T-cell (primary cell): ENCODE measurements at regions of chr16 and their contacts with region 1.

Region 1: GRCh38 chr16:168424-168823 is 2.6 kb downstream of the HBM start:
- DNase-seq: no peak
- ATAC-seq: no peak
- H3K4me3 ChIP-seq: no peak overlapping the region
- H3K4me3 Mint-ChIP-seq: no peak overlapping the region
- H3K27ac ChIP-seq: no peak overlapping the region
- H3K27ac Mint-ChIP-seq: peak overlapping the region in 1 of 2 donors; percentile 31
- H3K4me1 ChIP-seq: peaks cover 4 to 23% of the 10 kb centered on the region in 2 experiments
- H3K4me1 Mint-ChIP-seq: peaks cover 0 to 22% (median 10%) of the 10 kb centered on the region in 3 donors
- H3K27me3 ChIP-seq: peaks cover 9 to 70% of the 10 kb centered on the region in 2 experiments
- H3K27me3 Mint-ChIP-seq: peaks cover 34 to 57% of the 10 kb centered on the region in 2 donors

Region 2: GRCh38 chr16:138049-138417 is 30.4 kb before region 1 on chr16:
- CTCF ChIA-PET with region 1: no interaction called
- POLR2A ChIA-PET with region 1: interaction called in 1 of 2 experiments, 13 read pairs
- DNase-seq: peak in 20 of 35 experiments; percentile 3 to 42 (median 19)
- ATAC-seq: peak in 3 of 4 experiments; percentile 31 to 46 (median 35)
- H3K4me3 ChIP-seq: peak overlapping the region; percentile 63 to 64
- H3K4me3 Mint-ChIP-seq: peak overlapping the region; percentile 79 to 89 (median 81)
- H3K27ac ChIP-seq: peak overlapping the region; percentile 49
- H3K27ac Mint-ChIP-seq: peak overlapping the region in 1 of 2 donors; percentile 55
- H3K4me1 ChIP-seq: peaks cover 3 to 20% of the 10 kb centered on the region in 2 experiments
- H3K4me1 Mint-ChIP-seq: peaks cover 19 to 29% (median 21%) of the 10 kb centered on the region in 3 donors
- H3K27me3 ChIP-seq: peaks cover 0 to under 1% of the 10 kb centered on the region in 2 experiments
- H3K27me3 Mint-ChIP-seq: peaks cover 0 to under 1% of the 10 kb centered on the region in 2 donors

Region 3: GRCh38 chr16:200388-200787 is 32.0 kb after region 1 on chr16:
- CTCF ChIA-PET with region 1: no interaction called
- POLR2A ChIA-PET with region 1: no interaction called
- DNase-seq: no peak
- ATAC-seq: no peak
- H3K4me3 ChIP-seq: no peak overlapping the region
- H3K4me3 Mint-ChIP-seq: no peak overlapping the region
- H3K27ac ChIP-seq: no peak overlapping the region
- H3K27ac Mint-ChIP-seq: no peak overlapping the region
- H3K4me1 ChIP-seq: no peaks in the 10 kb centered on the region
- H3K4me1 Mint-ChIP-seq: no peaks in the 10 kb centered on the region
- H3K27me3 ChIP-seq: no peaks in the 10 kb centered on the region
- H3K27me3 Mint-ChIP-seq: no peaks in the 10 kb centered on the region